Upper lobe of right lung (tissue), 1 donor: ENCODE measurements at regions of chr19 and their contacts with region 1.

Region 1: GRCh38 chr19:858868-859843 is at the start of gene CFD:
- DNase-seq: peak; percentile 82
- ATAC-seq: peak; percentile 19
- H3K4me3 ChIP-seq: peak within 1 kb of the TSS; percentile 55
- H3K27ac ChIP-seq: peak within 1 kb of the TSS; percentile 72
- H3K4me1 ChIP-seq: peaks cover 14% of the 10 kb centered on the region
- H3K27me3 ChIP-seq: no peaks in the 10 kb centered on the region
- CTCF ChIP-seq: no peak
- total RNA-seq, gene CFD: 153 TPM

Region 2: GRCh38 chr19:917323-918151 is 58.4 kb after region 1 on chr19 and contains the start of gene KISS1R:
- intact Hi-C with region 1: loop called (anchors 5 kb)
- DNase-seq: peak; percentile 77
- ATAC-seq: peak; percentile 20
- H3K4me3 ChIP-seq: peak within 1 kb of the TSS; percentile 35
- H3K27ac ChIP-seq: no peak within 1 kb of the TSS
- H3K4me1 ChIP-seq: peaks cover 25% of the 10 kb centered on the region
- H3K27me3 ChIP-seq: peaks cover 56% of the 10 kb centered on the region
- CTCF ChIP-seq: peak; percentile 41
- total RNA-seq, gene KISS1R: not detected